PC-3 (cell line): ENCODE measurements at regions of chr19 and their contacts with region 1.

Region 1: DNA sequence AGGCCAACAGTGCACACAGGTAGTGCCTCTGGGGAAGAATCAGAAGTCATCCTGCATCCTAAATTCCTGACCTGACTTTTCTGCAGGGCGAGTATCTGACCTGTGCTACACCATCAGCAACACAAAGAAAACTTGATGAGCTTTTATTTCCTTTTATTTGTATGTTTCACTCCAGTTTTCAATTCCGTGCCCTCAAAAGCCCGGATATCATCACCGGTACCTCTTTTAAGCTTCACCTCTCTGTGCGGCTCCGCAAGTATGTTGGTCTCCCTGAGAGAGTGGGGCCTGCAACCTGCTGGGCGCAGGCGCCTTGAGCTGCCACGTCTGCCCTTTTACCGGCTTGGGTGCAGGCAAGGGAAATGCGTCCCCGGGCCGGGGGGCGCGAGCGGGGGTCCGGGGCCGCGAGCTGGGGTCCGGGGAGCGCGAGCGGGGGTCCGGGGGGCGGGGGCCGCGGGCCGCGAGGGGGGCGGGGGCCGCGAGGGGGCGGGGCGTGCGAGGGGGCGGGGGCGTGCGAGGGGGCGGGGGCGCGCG is 4.3 kb upstream of the DUXA start:
- DNase-seq: peak; percentile 38
- ATAC-seq: peak; percentile 77
- H3K4me3 ChIP-seq: peak overlapping the region; percentile 66
- H3K27ac ChIP-seq: no peak overlapping the region
- H3K4me1 ChIP-seq: peaks cover 4% of the 10 kb centered on the region
- H3K27me3 ChIP-seq: no peaks in the 10 kb centered on the region
- CTCF ChIP-seq: no peak

Region 2: GRCh38 chr19:56848166-56848565 is 323.4 kb before region 1 on chr19:
- CTCF ChIA-PET with region 1: no interaction called
- POLR2A ChIA-PET with region 1: no interaction called
- intact Hi-C with region 1: no loop called
- DNase-seq: no peak
- ATAC-seq: no peak
- H3K4me3 ChIP-seq: no peak overlapping the region
- H3K27ac ChIP-seq: no peak overlapping the region
- H3K4me1 ChIP-seq: no peaks in the 10 kb centered on the region
- H3K27me3 ChIP-seq: no peaks in the 10 kb centered on the region
- CTCF ChIP-seq: no peak

Region 3: GRCh38 chr19:57141699-57142098 is 29.9 kb before region 1 on chr19:
- CTCF ChIA-PET with region 1: no interaction called
- POLR2A ChIA-PET with region 1: no interaction called
- intact Hi-C with region 1: no loop called
- DNase-seq: no peak
- ATAC-seq: no peak
- H3K4me3 ChIP-seq: no peak overlapping the region
- H3K27ac ChIP-seq: no peak overlapping the region
- H3K4me1 ChIP-seq: no peaks in the 10 kb centered on the region
- H3K27me3 ChIP-seq: peaks cover 15% of the 10 kb centered on the region; the same call in 1 of the 2 replicates
- CTCF ChIP-seq: no peak

Region 4: GRCh38 chr19:57302020-57302465 is 130.4 kb after region 1 on chr19:
- CTCF ChIA-PET with region 1: no interaction called
- POLR2A ChIA-PET with region 1: interaction called, 13 read pairs
- intact Hi-C with region 1: no loop called
- DNase-seq: peak; percentile 94
- ATAC-seq: peak; percentile 97
- H3K4me3 ChIP-seq: no peak overlapping the region
- H3K27ac ChIP-seq: peak overlapping the region; percentile 33
- H3K4me1 ChIP-seq: peaks cover 26% of the 10 kb centered on the region
- H3K27me3 ChIP-seq: no peaks in the 10 kb centered on the region
- CTCF ChIP-seq: 0 out of 2 replicates have a peak, but pooled peaks have one; percentile 15